ENCODE measurements at regions of chr12 and their contacts with region 1.

Region 1: GRCh38 chr12:44694027-44694426 is 182.1 kb downstream of the NELL2 start:
- DNase-seq: no peak
- H3K4me3 Mint-ChIP-seq: no peak overlapping the region
- H3K27ac Mint-ChIP-seq: no peak overlapping the region
- H3K4me1 Mint-ChIP-seq: no peaks in the 10 kb centered on the region
- H3K27me3 Mint-ChIP-seq: no peaks in the 10 kb centered on the region

Region 2: DNA sequence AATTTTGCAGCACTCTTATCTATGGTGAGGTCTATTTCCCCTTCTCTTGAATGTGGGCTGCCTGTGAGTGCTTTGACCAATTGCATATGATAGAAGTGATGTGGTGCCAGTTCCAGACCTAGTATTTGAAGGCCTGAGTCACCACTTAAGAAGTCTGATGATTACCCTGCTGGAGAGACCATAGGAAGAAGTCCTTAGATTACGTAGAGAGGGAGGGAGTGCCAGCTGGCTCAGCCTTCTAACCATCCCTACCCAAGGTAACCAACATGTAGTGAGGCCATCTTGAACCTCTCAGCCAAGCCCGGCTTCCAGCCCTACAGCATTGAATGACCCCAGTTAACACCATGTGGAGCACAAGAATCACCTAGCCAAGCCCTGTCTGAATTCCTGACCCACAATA is 15.1 kb after region 1 on chr12:
- intact Hi-C with region 1: no loop called
- DNase-seq: no peak
- H3K4me3 Mint-ChIP-seq: no peak overlapping the region
- H3K27ac Mint-ChIP-seq: no peak overlapping the region
- H3K4me1 Mint-ChIP-seq: peaks cover 2% of the 10 kb centered on the region
- H3K27me3 Mint-ChIP-seq: no peaks in the 10 kb centered on the region

Region 3: GRCh38 chr12:44720265-44720664 is 26.2 kb after region 1 on chr12:
- intact Hi-C with region 1: loop called (anchors 1 kb)
- DNase-seq: no peak
- H3K4me3 Mint-ChIP-seq: no peak overlapping the region
- H3K27ac Mint-ChIP-seq: no peak overlapping the region
- H3K4me1 Mint-ChIP-seq: no peaks in the 10 kb centered on the region
- H3K27me3 Mint-ChIP-seq: no peaks in the 10 kb centered on the region

Region 4: DNA sequence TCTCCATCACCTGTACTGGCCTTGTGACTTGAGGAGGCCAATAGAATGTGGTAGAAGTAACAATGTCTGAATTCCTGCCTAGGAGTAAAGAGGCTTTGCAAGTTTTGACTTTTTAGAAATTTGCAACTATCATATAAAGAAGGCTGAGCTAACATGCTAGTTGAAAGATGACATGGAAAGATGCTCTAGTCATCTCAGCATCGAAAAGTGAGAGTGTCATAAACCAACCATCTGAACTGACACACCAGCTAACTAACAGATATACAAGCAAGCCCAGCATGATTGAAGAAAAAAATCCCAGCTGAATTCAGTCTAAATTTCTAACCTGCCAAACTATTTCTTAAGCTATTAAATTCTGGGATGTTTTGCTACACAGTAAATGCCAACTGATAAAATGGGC is 65.3 kb after region 1 on chr12:
- intact Hi-C with region 1: no loop called
- DNase-seq: no peak
- H3K4me3 Mint-ChIP-seq: no peak overlapping the region
- H3K27ac Mint-ChIP-seq: no peak overlapping the region
- H3K4me1 Mint-ChIP-seq: no peaks in the 10 kb centered on the region
- H3K27me3 Mint-ChIP-seq: no peaks in the 10 kb centered on the region

Measured in activated T-helper 2 cell treated with anti-CD3 and anti-CD28 coated beads, Interferon-gamma antibody, Interleukin-2, Interleukin-4, amounts not matched to agents 10 μg/mL and 5 μg/mL and 100 μg/mL, durations not matched to agents 14 hours and 24 hours and 36 hours (primary cell).